ENCODE measurements at regions of chr2 and their contacts with region 1.

Region 1: GRCh38 chr2:25294573-25295462 is 46.9 kb downstream of the DNMT3A start:
- DNase-seq: peak; percentile 89
- H3K4me3 Mint-ChIP-seq: peak overlapping the region; percentile 60
- H3K27ac Mint-ChIP-seq: peak overlapping the region; percentile 92
- H3K4me1 Mint-ChIP-seq: peaks cover 56% of the 10 kb centered on the region
- H3K27me3 Mint-ChIP-seq: no peaks in the 10 kb centered on the region

Region 2: DNA sequence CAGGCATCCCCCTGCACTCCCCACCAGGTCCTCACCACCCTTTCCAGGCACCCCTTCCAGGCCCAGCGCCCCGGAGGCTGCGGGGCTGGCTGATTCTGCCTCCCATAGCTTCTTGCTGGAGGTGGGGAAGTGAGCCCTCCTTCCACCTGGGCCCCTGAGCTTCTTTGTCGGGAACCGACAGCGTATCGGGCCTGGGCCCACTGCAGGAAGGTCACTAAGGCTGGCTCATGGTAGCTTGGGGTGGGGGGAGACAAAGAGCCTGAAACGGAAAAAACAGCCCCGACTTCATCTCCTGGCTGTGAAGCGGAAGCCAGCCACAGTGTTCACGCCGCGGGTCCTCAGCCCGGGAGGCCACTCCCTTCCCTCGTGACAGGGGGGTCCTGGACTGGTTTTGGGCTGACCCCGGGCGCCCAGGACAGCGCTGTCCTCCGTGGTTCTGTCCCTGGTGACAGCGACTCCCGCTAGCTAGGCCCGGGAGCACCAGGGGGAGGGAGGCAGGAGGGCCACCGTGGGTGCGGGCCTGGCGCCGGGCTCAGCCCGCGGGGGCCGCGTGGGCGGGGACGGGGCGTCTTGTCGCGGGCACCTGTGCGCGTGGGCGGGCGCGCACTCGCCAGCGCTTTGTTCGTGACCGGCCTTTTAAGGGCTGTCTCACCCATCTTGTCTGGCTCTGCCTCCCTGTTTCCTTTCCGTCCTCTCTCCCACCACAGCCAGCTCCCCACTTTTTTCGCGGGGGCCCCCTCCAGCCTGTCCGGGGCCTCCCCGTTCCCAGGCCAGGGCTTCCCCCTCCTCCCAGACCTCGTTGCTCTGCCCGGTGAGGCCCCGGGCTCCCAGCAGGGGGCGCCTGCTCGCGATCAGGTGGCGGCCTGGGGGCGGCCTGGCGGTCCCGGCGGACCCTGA is 18.0 kb before region 1 on chr2:
- CTCF ChIA-PET with region 1: interaction called, 27 read pairs
- POLR2A ChIA-PET with region 1: no interaction called
- DNase-seq: peak; percentile 74
- H3K4me3 Mint-ChIP-seq: peak overlapping the region; percentile 47
- H3K27ac Mint-ChIP-seq: peak overlapping the region; percentile 97
- H3K4me1 Mint-ChIP-seq: peaks cover 79% of the 10 kb centered on the region
- H3K27me3 Mint-ChIP-seq: no peaks in the 10 kb centered on the region